Naive thymus-derived CD4-positive, alpha-beta T cell (primary cell): ENCODE measurements at regions of chr1 and their contacts with region 1.

Region 1: GRCh38 chr1:211323156-211324063 is 3.2 kb upstream of the TRAF5 start:
- DNase-seq: peak in 8 of 9 donors; percentile 55 to 75 (median 68)
- ATAC-seq: peak; percentile 84
- H3K4me3 ChIP-seq: no peak overlapping the region
- H3K4me3 Mint-ChIP-seq: no peak overlapping the region
- H3K27ac ChIP-seq: no peak overlapping the region
- H3K27ac Mint-ChIP-seq: no peak overlapping the region
- H3K4me1 ChIP-seq: peaks cover 7 to 20% of the 10 kb centered on the region in 2 donors
- H3K4me1 Mint-ChIP-seq: peaks cover 20 to 41% (median 35%) of the 10 kb centered on the region in 7 donors
- H3K27me3 ChIP-seq: no peaks in the 10 kb centered on the region
- H3K27me3 Mint-ChIP-seq: no peaks in the 10 kb centered on the region

Region 2: DNA sequence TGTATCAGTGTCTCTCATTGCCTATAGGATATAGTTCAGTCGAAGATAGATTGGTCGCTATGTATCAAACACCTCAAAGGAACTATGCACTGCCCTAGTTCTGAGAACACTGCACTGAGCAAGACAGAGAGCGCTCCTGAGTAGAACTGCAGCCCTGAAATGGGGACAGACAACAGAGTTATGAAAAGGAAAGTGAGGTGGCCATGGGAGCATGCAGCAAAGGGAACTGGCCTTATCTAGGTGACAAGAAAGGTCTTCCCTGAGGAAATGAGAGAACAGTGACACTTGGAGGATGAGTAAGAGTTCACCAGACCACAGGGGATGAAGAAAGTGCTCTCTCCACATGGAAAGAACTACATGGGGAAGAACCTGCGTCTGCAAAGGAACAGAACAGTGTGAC is 1655.7 kb before region 1 on chr1:
- CTCF ChIA-PET with region 1: no interaction called
- POLR2A ChIA-PET with region 1: no interaction called
- intact Hi-C with region 1: no loop called
- DNase-seq: no peak
- ATAC-seq: peak; percentile 46
- H3K4me3 ChIP-seq: no peak overlapping the region
- H3K4me3 Mint-ChIP-seq: no peak overlapping the region
- H3K27ac ChIP-seq: no peak overlapping the region
- H3K27ac Mint-ChIP-seq: no peak overlapping the region
- H3K4me1 ChIP-seq: peaks cover 0 to under 1% of the 10 kb centered on the region in 2 donors
- H3K4me1 Mint-ChIP-seq: peaks cover 0 to 22% (median 4%) of the 10 kb centered on the region in 7 donors
- H3K27me3 ChIP-seq: no peaks in the 10 kb centered on the region
- H3K27me3 Mint-ChIP-seq: peaks cover 0 to 5% (median 0%) of the 10 kb centered on the region in 5 donors

Region 3: DNA sequence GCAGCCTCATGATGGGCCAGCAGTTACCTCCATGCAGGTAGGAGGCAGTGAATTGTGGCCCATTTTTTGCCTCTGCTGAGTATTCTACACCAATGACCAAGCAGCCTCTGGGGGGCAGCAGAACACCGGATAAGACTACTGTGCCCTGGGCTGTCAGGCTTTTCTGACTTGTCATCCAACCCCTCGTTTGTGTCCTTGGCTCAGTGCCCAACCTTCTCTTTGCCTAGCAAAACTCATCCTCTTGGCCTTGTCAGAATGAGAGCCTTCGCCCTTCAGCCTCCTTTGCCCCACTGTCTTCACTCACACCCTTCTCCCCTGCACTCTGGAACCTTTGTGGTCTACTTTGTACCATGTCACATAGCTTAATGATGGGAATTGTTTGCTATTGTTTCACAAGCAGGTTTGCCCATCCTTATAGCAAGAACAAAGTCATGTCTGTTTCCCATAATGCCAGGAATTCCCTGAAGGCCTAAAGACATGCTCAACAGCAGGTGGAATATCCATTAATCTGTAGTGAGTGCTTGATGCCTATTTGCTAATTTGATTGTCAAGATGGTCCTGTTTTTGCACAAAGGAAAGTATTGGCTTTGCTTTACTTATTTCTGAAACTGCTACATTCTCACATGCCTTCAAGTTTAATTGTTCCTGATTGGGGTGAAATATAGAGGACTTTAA is 738.8 kb before region 1 on chr1:
- CTCF ChIA-PET with region 1: no interaction called
- POLR2A ChIA-PET with region 1: no interaction called
- intact Hi-C with region 1: loop called in 1 of 2 experiments (anchors 10 kb)
- DNase-seq: peak; percentile 7 to 63 (median 47)
- ATAC-seq: peak; percentile 70
- H3K4me3 ChIP-seq: no peak overlapping the region
- H3K4me3 Mint-ChIP-seq: no peak overlapping the region
- H3K27ac ChIP-seq: no peak overlapping the region
- H3K27ac Mint-ChIP-seq: no peak overlapping the region
- H3K4me1 ChIP-seq: no peaks in the 10 kb centered on the region
- H3K4me1 Mint-ChIP-seq: peaks cover 0 to 8% (median 0%) of the 10 kb centered on the region in 7 donors
- H3K27me3 ChIP-seq: no peaks in the 10 kb centered on the region
- H3K27me3 Mint-ChIP-seq: peaks cover 0 to 6% (median 3%) of the 10 kb centered on the region in 5 donors

Region 4: DNA sequence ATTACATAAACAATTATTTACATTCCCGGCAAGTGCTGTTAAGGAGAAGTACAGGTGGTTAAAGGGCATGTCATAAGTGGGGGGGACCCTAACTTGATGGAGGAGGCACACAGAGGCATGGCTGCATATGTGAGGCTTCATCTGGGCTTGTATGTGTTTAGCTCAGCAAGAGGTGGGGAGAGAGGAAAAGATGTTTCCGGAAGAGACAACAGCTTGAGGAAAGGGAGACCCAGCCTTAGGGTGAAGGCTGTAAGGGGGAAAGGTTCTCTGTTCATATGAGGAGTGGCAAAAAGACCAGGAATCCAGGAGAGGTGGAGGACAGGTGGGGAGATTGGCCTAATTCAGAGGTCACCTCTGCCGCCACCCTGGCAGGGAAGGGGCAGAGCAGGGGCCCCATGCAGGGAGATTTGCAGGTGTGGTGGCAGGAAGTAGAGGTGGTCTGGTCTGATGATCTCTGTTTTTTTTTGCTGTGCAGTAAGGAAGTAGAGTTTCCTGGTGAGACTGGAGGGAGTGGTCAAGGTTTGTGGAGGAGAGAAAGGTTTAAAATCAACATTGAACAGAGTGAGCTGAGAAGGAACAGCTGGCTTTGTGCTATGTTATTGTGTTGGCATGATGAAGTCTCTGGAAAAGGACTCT is 12.2 kb after region 1 on chr1:
- CTCF ChIA-PET with region 1: interaction called, 25 read pairs
- POLR2A ChIA-PET with region 1: interaction called, 49 read pairs
- intact Hi-C with region 1: loop called (anchors 1 kb)
- DNase-seq: peak in 6 of 9 donors; percentile 24 to 36 (median 33)
- ATAC-seq: peak; percentile 72
- H3K4me3 ChIP-seq: peak overlapping the region; percentile 43
- H3K4me3 Mint-ChIP-seq: peak overlapping the region; percentile 77 to 87 (median 80)
- H3K27ac ChIP-seq: peak overlapping the region; percentile 69
- H3K27ac Mint-ChIP-seq: peak overlapping the region; percentile 78 to 97 (median 87)
- H3K4me1 ChIP-seq: peaks cover 72 to 85% of the 10 kb centered on the region in 2 donors
- H3K4me1 Mint-ChIP-seq: peaks cover 72 to 97% (median 85%) of the 10 kb centered on the region in 7 donors
- H3K27me3 ChIP-seq: no peaks in the 10 kb centered on the region
- H3K27me3 Mint-ChIP-seq: no peaks in the 10 kb centered on the region

Region 5: GRCh38 chr1:211369640-211370039 is 46.2 kb after region 1 on chr1:
- CTCF ChIA-PET with region 1: no interaction called
- POLR2A ChIA-PET with region 1: interaction called, 3 read pairs
- intact Hi-C with region 1: loop called in 1 of 2 experiments (anchors 5 kb)
- DNase-seq: no peak
- ATAC-seq: no peak
- H3K4me3 ChIP-seq: no peak overlapping the region
- H3K4me3 Mint-ChIP-seq: no peak overlapping the region
- H3K27ac ChIP-seq: no peak overlapping the region
- H3K27ac Mint-ChIP-seq: peak overlapping the region in 5 of 9 donors; percentile 2 to 60 (median 22)
- H3K4me1 ChIP-seq: no peaks in the 10 kb centered on the region
- H3K4me1 Mint-ChIP-seq: peaks cover 0 to 20% (median 10%) of the 10 kb centered on the region in 7 donors
- H3K27me3 ChIP-seq: no peaks in the 10 kb centered on the region
- H3K27me3 Mint-ChIP-seq: no peaks in the 10 kb centered on the region

Region 6: DNA sequence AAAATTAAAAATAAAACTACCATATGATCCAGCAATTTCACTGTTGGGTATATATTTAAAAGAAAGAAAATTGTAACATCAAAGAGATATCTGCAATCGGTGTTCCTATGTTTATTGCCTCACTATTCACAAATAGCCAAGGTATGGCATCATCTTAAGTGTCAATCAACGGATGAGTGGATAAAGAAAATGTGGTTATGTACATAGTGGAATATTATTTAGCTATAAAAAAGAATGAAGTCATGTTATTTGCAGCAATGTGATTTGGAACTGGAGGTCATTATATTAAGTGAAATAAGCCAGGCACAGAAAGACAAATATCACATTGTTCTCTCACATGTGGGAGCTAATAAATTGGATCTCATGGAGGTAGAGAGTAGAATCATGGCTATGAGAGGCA is 92.3 kb after region 1 on chr1:
- CTCF ChIA-PET with region 1: interaction called, 5 read pairs
- POLR2A ChIA-PET with region 1: no interaction called
- intact Hi-C with region 1: loop called in 1 of 2 experiments (anchors 2 kb)
- DNase-seq: no peak
- ATAC-seq: no peak
- H3K4me3 ChIP-seq: no peak overlapping the region
- H3K4me3 Mint-ChIP-seq: peak overlapping the region; percentile 23 to 85 (median 70)
- H3K27ac ChIP-seq: no peak overlapping the region
- H3K27ac Mint-ChIP-seq: peak overlapping the region in 5 of 9 donors; percentile 7 to 75 (median 49)
- H3K4me1 ChIP-seq: peaks cover 0 to 6% of the 10 kb centered on the region in 2 donors
- H3K4me1 Mint-ChIP-seq: peaks cover 1 to 20% (median 15%) of the 10 kb centered on the region in 7 donors
- H3K27me3 ChIP-seq: no peaks in the 10 kb centered on the region
- H3K27me3 Mint-ChIP-seq: peaks cover 0 to 9% (median 0%) of the 10 kb centered on the region in 5 donors

Region 7: GRCh38 chr1:211514030-211514754 is 190.8 kb after region 1 on chr1:
- CTCF ChIA-PET with region 1: interaction called, 6 read pairs
- POLR2A ChIA-PET with region 1: no interaction called
- intact Hi-C with region 1: loop called (anchors 1 kb)
- DNase-seq: peak; percentile 16 to 71 (median 46)
- ATAC-seq: peak; percentile 80
- H3K4me3 ChIP-seq: no peak overlapping the region
- H3K4me3 Mint-ChIP-seq: peak overlapping the region; percentile 61 to 84 (median 73)
- H3K27ac ChIP-seq: no peak overlapping the region
- H3K27ac Mint-ChIP-seq: peak overlapping the region in 2 of 9 donors; percentile 46 to 63
- H3K4me1 ChIP-seq: peaks cover 10 to 11% of the 10 kb centered on the region in 2 donors
- H3K4me1 Mint-ChIP-seq: peaks cover 5 to 35% (median 20%) of the 10 kb centered on the region in 7 donors
- H3K27me3 ChIP-seq: no peaks in the 10 kb centered on the region
- H3K27me3 Mint-ChIP-seq: peaks cover 0 to 12% (median 5%) of the 10 kb centered on the region in 5 donors

Region 8: DNA sequence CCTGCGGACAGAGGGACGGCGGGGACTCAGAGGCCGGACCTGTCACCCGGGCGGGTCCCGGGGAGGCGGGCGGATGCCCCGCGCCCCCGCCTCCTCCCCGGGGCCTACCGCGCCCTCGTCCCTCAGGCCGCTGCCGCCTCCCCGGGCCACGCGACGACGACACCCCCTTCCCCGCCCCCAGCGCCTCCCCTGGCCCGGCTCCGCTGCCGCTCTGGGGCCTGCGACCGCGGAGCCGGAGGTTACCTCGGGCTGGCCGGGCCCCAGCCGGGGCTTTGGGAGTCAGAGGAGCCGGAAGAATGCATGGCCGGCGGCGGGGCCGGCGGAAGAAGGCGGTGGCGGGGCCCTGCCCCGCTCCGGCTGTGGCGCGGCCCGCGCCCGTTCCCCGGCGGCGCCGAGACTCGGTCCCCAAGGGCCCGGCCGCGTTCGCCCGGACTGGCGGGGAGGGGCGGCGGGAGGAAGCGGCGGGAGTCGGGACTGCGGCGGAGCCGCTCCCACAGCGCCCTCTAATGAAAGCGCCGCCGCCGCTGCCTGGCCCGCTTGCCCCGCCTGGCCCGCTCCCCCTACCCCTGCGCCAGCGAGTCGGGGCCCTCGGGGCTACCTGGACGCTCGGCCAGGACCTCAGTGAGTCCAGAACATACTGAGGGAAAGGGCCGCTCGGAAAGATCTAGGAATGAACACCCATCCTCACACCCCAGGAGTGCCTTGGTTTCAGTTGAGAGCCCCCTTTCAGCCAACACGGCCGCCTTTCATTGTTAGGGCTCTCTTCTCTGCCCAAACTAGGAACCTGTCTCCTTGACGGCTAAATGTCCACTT is 507.1 kb after region 1 on chr1 and contains the start of gene LPGAT1:
- CTCF ChIA-PET with region 1: no interaction called
- POLR2A ChIA-PET with region 1: no interaction called
- intact Hi-C with region 1: loop called in 1 of 2 experiments (anchors 5 kb)
- DNase-seq: peak; percentile 28 to 81 (median 54)
- ATAC-seq: peak; percentile 92
- H3K4me3 ChIP-seq: peak within 1 kb of the TSS; percentile 68
- H3K4me3 Mint-ChIP-seq: peak within 1 kb of the TSS; percentile 88 to 97 (median 90)
- H3K27ac ChIP-seq: peak within 1 kb of the TSS; percentile 64
- H3K27ac Mint-ChIP-seq: peak within 1 kb of the TSS; percentile 60 to 94 (median 85)
- H3K4me1 ChIP-seq: peaks cover 20 to 40% of the 10 kb centered on the region in 2 donors
- H3K4me1 Mint-ChIP-seq: peaks cover 34 to 69% (median 64%) of the 10 kb centered on the region in 7 donors
- H3K27me3 ChIP-seq: no peaks in the 10 kb centered on the region
- H3K27me3 Mint-ChIP-seq: peaks cover 0 to 3% (median 0%) of the 10 kb centered on the region in 5 donors
- total RNA-seq, gene LPGAT1: 11.7 to 76.1 (median 19.3) TPM